Activated CD4-positive, alpha-beta memory T cell treated with anti-CD3 and anti-CD28 coated beads, Interleukin-2, amount 10 ng/mL, durations not matched to agents 7 days and 5 days (primary cell): ENCODE measurements at regions of chr3 and their contacts with region 1.

Region 1: DNA sequence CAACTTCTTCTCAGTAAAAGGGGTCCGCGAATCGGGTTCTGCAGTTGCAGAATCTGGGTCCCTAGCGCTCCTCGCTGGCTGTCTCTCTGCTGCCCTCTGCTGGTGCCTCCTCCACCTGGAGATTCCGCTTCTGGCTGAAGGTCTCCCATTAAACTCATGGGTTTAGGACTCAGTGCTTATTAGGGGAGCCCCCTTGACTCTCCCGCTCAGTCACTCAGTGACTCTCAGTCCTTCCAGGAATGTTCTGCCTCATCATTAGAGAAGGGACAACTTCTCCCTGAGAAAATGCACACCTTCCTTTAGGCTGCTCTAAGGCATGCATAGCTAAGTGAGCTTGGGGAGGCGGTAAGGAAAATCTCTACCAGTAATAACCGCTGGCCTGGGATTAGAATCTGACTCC is 7.1 kb downstream of the CPN2 start:
- DNase-seq: peak; percentile 73
- H3K4me3 Mint-ChIP-seq: no peak overlapping the region
- H3K27ac Mint-ChIP-seq: no peak overlapping the region
- H3K4me1 Mint-ChIP-seq: no peaks in the 10 kb centered on the region
- H3K27me3 Mint-ChIP-seq: peaks cover 19% of the 10 kb centered on the region

Region 2: GRCh38 chr3:194306109-194306686 is 37.8 kb before region 1 on chr3:
- CTCF ChIA-PET with region 1: no interaction called
- POLR2A ChIA-PET with region 1: no interaction called
- DNase-seq: peak; percentile 87
- H3K4me3 Mint-ChIP-seq: peak overlapping the region; percentile 48
- H3K27ac Mint-ChIP-seq: peak overlapping the region; percentile 93
- H3K4me1 Mint-ChIP-seq: peaks cover 69% of the 10 kb centered on the region
- H3K27me3 Mint-ChIP-seq: no peaks in the 10 kb centered on the region

Region 3: GRCh38 chr3:194333212-194333980 is 10.6 kb before region 1 on chr3:
- CTCF ChIA-PET with region 1: interaction called, 54 read pairs
- POLR2A ChIA-PET with region 1: no interaction called
- DNase-seq: peak; percentile 88
- H3K4me3 Mint-ChIP-seq: peak overlapping the region; percentile 65
- H3K27ac Mint-ChIP-seq: no peak overlapping the region
- H3K4me1 Mint-ChIP-seq: peaks cover 12% of the 10 kb centered on the region
- H3K27me3 Mint-ChIP-seq: peaks cover 36% of the 10 kb centered on the region

Region 4: GRCh38 chr3:194395778-194396547 is 52.0 kb after region 1 on chr3:
- CTCF ChIA-PET with region 1: interaction called, 80 read pairs
- POLR2A ChIA-PET with region 1: interaction called, 3 read pairs
- DNase-seq: peak; percentile 64
- H3K4me3 Mint-ChIP-seq: peak overlapping the region; percentile 55
- H3K27ac Mint-ChIP-seq: peak overlapping the region; percentile 47
- H3K4me1 Mint-ChIP-seq: peaks cover 55% of the 10 kb centered on the region
- H3K27me3 Mint-ChIP-seq: peaks cover 46% of the 10 kb centered on the region

Region 5: GRCh38 chr3:194404365-194405140 is 60.5 kb after region 1 on chr3:
- CTCF ChIA-PET with region 1: interaction called, 80 read pairs
- POLR2A ChIA-PET with region 1: no interaction called
- DNase-seq: no peak
- H3K4me3 Mint-ChIP-seq: no peak overlapping the region
- H3K27ac Mint-ChIP-seq: no peak overlapping the region
- H3K4me1 Mint-ChIP-seq: peaks cover 8% of the 10 kb centered on the region
- H3K27me3 Mint-ChIP-seq: peaks cover 4% of the 10 kb centered on the region

Region 6: GRCh38 chr3:194757647-194758061 is 413.6 kb after region 1 on chr3:
- CTCF ChIA-PET with region 1: no interaction called
- POLR2A ChIA-PET with region 1: no interaction called
- DNase-seq: no peak
- H3K4me3 Mint-ChIP-seq: no peak overlapping the region
- H3K27ac Mint-ChIP-seq: no peak overlapping the region
- H3K4me1 Mint-ChIP-seq: no peaks in the 10 kb centered on the region
- H3K27me3 Mint-ChIP-seq: peaks cover 7% of the 10 kb centered on the region